Heart right ventricle (tissue), 16 donors: ENCODE measurements at regions of chr1 and their contacts with region 1.

Region 1: DNA sequence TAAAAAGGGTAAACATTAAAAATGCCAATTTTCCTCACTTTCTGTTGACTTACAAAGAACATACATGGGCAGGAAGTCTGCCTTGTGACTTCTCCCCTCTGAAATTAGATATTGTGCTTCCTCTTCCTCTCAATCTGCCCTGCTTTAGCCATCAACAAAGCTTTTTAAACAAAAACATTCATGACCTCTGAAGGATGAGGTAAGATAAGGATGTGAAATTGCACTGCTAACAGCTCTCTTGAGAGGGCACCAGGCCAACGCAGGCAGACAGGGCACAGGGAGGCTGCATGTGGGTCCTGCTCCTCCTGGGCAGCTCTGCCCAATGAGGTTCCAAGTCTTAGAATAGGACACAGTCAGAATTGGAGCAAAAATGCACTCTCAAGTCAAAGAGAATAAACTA is 62.1 kb downstream of the DEGS1 start:
- DNase-seq: peak; percentile 60 to 67
- ATAC-seq: peak; percentile 80 to 95 (median 92)
- H3K4me3 ChIP-seq: no peak overlapping the region
- H3K27ac ChIP-seq: peak overlapping the region in 9 of 10 donors; percentile 12 to 87 (median 61)
- H3K4me1 ChIP-seq: peaks cover 0 to 22% (median 10%) of the 10 kb centered on the region in 9 donors
- H3K27me3 ChIP-seq: no peaks in the 10 kb centered on the region
- CTCF ChIP-seq: no peak

Region 2: DNA sequence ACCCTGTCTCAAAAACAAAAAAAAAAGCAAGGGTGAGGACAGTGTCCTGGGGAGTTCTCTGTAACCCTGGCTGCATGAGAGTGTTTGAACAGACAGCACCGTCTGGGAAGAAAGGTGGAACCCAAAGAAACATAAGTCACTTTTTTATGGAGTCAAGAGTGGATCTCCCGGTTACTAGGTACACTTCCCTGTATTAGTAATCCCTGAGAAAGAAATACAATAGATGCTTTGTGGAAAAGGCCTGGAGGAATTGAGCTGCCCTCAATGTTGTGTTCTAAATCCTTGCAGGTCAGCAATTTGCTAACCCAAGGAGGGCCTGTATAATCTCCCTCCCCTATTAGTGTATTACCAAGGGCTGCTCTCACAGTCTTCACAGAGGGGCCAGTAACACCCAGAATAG is 45.5 kb before region 1 on chr1:
- intact Hi-C with region 1: loop called in 1 of 10 experiments (anchors 2 kb)
- DNase-seq: no peak
- ATAC-seq: no peak
- H3K4me3 ChIP-seq: no peak overlapping the region
- H3K27ac ChIP-seq: no peak overlapping the region
- H3K4me1 ChIP-seq: peaks cover 1 to 35% (median 12%) of the 10 kb centered on the region in 9 donors
- H3K27me3 ChIP-seq: no peaks in the 10 kb centered on the region
- CTCF ChIP-seq: no peak

Region 3: DNA sequence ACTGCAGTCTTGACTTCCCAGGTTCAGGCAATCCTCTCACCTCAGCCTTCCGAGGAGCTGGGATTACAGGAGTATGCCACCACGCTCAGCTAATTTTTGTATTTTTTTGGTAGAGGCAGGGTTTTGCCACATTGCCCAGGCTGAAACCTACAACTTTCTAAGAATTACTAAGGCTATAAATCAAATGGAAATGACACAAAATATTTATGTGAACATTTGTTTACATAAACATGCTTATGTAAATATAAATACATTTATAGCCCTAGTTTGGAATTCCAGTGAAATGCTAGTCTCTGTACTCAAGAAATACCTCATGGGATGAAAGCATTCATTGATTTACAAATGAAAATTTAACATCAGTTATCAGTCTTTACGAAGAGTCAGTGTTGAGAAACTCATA is 37.0 kb after region 1 on chr1:
- intact Hi-C with region 1: loop called in 1 of 10 experiments (anchors 5 kb)
- DNase-seq: no peak
- ATAC-seq: no peak
- H3K4me3 ChIP-seq: no peak overlapping the region
- H3K27ac ChIP-seq: no peak overlapping the region
- H3K4me1 ChIP-seq: peaks cover 0 to 3% (median 0%) of the 10 kb centered on the region in 9 donors
- H3K27me3 ChIP-seq: no peaks in the 10 kb centered on the region
- CTCF ChIP-seq: no peak